ENCODE measurements at regions of chr22 and their contacts with region 1.

Region 1: DNA sequence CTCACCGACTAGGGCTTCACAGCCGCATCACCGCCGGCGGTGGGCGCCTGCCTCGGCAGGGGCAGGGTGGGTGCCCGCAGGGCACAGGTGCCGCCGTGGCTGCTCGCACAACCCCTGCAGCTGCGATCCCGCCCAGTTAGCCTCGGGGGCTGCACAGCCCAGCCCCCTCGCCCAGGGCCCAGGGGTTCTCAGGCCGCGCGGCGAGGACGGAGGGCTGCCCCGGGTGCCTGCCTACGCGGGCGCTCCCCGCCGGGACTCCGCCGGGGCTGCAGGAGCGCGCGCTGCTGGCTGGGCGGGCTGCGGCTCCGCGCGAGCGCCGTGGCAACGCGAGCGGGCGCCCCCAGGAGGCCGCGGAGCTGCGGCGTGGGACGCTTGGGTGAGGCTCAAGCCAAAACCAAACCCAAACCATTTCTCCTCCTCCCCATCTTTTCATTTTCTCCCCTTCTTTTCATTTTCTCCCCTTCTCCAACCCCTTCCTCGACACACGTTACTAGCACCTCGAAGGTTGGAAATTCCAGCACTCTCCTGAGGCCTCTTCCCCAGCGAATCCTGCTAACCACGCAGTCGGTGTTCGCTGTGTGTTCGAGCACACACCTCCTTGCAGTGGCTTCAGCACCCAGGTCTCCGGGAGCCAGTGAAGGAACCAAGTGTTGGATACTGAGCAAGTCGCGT is at the start of gene MICAL3:
- DNase-seq: no peak
- ATAC-seq: peak; percentile 92
- H3K4me3 ChIP-seq: peak within 1 kb of the TSS; percentile 58 to 79 (median 64)
- H3K27ac ChIP-seq: no peak within 1 kb of the TSS
- H3K4me1 ChIP-seq: peaks cover 25% of the 10 kb centered on the region
- H3K27me3 ChIP-seq: peaks cover 0 to 20% of the 10 kb centered on the region in 2 experiments; a peak in 4 of 5 replicates
- CTCF ChIP-seq: peak; percentile 61
- EP300 ChIP-seq: no peak
- POLR2A ChIP-seq: no peak
- RAD21 ChIP-seq: peak; percentile 84
- total RNA-seq, gene MICAL3: 9.5 and 12.5 TPM in 2 replicates

Region 2: GRCh38 chr22:17830043-17830961 is 194.1 kb before region 1 on chr22:
- CTCF ChIA-PET with region 1: interaction called, 10 read pairs
- POLR2A ChIA-PET with region 1: no interaction called
- in situ Hi-C with region 1: loop called (anchors 10 kb)
- intact Hi-C with region 1: loop called (anchors 1 kb)
- DNase-seq: peak; percentile 63
- ATAC-seq: peak; percentile 93
- H3K4me3 ChIP-seq: no peak overlapping the region
- H3K27ac ChIP-seq: no peak overlapping the region
- H3K4me1 ChIP-seq: no peaks in the 10 kb centered on the region
- H3K27me3 ChIP-seq: no peaks in the 10 kb centered on the region
- CTCF ChIP-seq: peak; percentile 98
- EP300 ChIP-seq: no peak
- POLR2A ChIP-seq: no peak
- RAD21 ChIP-seq: peak; percentile 94

Region 3: DNA sequence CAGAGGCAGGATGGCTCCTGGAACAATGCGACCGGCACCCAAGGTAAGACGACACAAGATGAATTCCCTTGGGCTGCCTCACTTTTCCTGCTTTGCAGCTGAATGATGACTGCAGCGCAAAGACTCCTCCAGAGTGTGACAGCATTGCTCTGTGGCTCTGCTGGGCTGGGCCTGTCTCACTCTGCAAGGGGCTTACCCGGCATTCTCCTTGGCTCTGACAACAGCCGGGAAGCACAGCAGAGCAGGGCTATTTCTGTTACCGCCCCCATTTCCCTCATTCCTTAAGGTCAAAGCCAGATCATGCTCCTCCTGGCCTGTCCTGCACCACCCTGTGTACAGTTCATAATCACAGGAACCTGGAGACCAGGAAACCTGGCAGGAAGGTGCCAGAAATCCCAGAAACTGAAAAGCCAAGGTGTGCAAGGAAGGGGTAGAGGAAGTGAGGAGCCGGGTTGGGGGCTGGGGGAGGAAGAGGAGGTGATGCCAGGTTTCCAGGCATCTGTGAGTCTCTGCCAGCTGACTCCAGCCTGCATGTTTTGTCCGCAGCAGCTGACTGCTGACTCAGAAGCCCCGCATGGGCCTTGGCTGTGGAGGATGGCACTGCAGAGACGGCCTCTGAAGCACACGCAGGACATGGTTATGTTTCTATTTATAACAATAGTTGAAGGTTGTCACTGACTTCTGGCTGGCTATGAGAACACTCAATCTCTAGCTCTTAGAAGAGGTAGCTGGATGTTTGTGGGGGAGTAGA is 113.7 kb before region 1 on chr22:
- CTCF ChIA-PET with region 1: no interaction called
- POLR2A ChIA-PET with region 1: no interaction called
- in situ Hi-C with region 1: loop called (anchors 10 kb)
- intact Hi-C with region 1: no loop called
- DNase-seq: no peak
- ATAC-seq: peak; percentile 72
- H3K4me3 ChIP-seq: no peak overlapping the region
- H3K27ac ChIP-seq: no peak overlapping the region
- H3K4me1 ChIP-seq: peaks cover 7% of the 10 kb centered on the region; the same call in 1 of the 2 replicates
- H3K27me3 ChIP-seq: no peaks in the 10 kb centered on the region
- CTCF ChIP-seq: peak; percentile 61
- EP300 ChIP-seq: no peak
- POLR2A ChIP-seq: no peak
- RAD21 ChIP-seq: no peak